CD4-positive, alpha-beta memory T cell (primary cell): ENCODE measurements at regions of chr13 and their contacts with region 1.

Region 1: DNA sequence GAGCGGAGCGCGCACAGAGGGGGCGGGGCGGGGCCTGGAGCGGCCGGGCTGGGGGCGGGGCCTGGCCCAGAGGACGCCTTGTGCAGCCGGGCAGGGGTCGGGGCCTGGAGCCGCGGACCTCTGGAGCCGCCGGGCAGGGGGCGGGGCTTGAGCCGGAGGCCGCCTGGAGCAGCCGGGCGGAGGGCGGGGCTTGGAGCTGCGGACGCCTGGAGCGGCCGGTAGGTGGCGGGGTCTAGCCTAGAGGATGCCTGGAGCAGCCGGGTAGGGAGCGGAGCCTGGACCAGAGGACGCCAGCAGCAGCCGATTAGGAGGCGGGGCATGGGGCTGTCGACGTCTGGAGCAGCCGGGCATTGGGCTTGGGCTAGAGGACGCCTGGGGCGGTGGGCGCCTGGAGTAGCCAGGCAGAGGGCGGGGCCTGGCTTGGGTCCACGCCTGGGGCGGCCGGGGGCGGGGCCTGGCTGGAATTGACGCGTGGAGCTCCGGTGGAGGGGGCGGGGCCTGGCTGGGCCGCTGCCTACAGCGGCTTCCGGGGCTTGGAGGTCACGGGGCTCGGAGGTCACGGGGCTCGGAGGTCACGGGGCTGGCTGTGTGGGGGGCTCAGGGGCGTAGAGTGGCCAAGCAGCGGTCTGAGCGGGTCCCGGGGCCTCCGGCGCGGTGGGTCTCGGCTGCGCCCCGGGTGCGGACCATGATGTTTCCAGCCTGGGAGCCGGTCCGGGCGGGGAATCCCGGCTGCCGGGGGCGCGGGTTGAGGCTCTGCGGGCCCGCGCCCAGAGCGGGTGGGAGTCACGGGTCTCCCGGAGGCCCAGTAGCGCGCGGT is at the start of gene ANKRD10:
- DNase-seq: peak; percentile 90 to 94 (median 91)
- H3K4me3 ChIP-seq: peak within 1 kb of the TSS; percentile 26 to 89
- H3K4me3 Mint-ChIP-seq: peak within 1 kb of the TSS; percentile 89 to 95 (median 92)
- H3K27ac ChIP-seq: peak within 1 kb of the TSS; percentile 77
- H3K27ac Mint-ChIP-seq: peak within 1 kb of the TSS; percentile 90 to 96 (median 95)
- H3K4me1 ChIP-seq: peaks cover 39% of the 10 kb centered on the region
- H3K4me1 Mint-ChIP-seq: peaks cover 20 to 52% (median 37%) of the 10 kb centered on the region in 4 donors
- H3K27me3 ChIP-seq: no peaks in the 10 kb centered on the region
- H3K27me3 Mint-ChIP-seq: no peaks in the 10 kb centered on the region
- total RNA-seq, gene ANKRD10: 127 to 140 TPM

Region 2: GRCh38 chr13:110561344-110562035 is 353.8 kb before region 1 on chr13 and contains the start of gene RAB20:
- CTCF ChIA-PET with region 1: no interaction called
- POLR2A ChIA-PET with region 1: interaction called, 4 read pairs
- intact Hi-C with region 1: loop called (anchors 2 kb)
- DNase-seq: peak; percentile 28 to 63 (median 41)
- H3K4me3 ChIP-seq: peak within 1 kb of the TSS; percentile 61 to 68
- H3K4me3 Mint-ChIP-seq: peak within 1 kb of the TSS; percentile 93 to 100 (median 97)
- H3K27ac ChIP-seq: peak within 1 kb of the TSS; percentile 41
- H3K27ac Mint-ChIP-seq: peak within 1 kb of the TSS; percentile 76 to 94 (median 89)
- H3K4me1 ChIP-seq: peaks cover 17% of the 10 kb centered on the region
- H3K4me1 Mint-ChIP-seq: peaks cover 11 to 41% (median 23%) of the 10 kb centered on the region in 4 donors
- H3K27me3 ChIP-seq: no peaks in the 10 kb centered on the region
- H3K27me3 Mint-ChIP-seq: peaks cover 0 to 2% of the 10 kb centered on the region in 2 donors
- total RNA-seq, gene RAB20: 2.2 to 3.2 TPM

Region 3: DNA sequence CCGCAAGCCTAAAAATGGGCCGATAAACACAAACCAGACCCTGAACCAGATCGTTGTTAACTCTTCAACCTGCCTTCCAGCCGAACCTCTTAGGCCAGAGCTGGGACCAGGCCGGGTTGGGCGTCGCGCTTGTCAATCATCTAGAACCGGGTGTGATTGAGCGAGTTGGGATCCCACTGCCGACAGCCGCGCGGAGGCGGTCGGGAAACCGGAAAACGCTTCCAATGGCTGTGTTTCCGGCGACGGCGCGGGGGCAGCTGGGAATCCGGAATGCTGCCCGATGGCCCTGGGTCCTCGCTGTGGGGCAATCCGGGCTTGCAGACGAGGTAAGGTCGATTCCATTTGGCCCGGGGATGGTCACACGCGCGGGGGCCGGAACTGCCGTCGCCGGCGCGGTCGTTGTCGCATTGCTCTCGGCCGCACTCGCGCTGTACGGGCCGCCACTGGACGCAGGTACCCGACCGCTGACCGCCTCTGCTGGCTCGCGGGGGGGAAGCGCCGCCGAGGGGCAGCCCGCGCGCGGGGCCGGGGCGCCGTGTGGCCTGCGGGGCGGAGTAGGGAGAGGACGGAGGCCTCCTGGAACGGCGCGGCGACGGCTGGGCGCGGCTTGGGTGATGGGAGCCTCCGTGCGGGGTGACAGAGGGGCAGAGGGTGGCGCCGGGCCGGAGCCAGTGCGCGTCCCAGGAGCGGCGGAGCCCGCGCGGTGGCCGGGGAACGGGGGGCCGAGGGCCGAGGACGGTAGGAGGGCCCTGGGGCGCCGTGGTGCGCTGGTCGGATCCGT is 299.8 kb before region 1 on chr13 and contains the start of gene NAXD:
- CTCF ChIA-PET with region 1: no interaction called
- POLR2A ChIA-PET with region 1: interaction called, 5 read pairs
- intact Hi-C with region 1: loop called (anchors 10 kb)
- DNase-seq: peak; percentile 71 to 75 (median 73)
- H3K4me3 ChIP-seq: peak within 1 kb of the TSS; percentile 53 to 67
- H3K4me3 Mint-ChIP-seq: peak within 1 kb of the TSS; percentile 88 to 96 (median 94)
- H3K27ac ChIP-seq: peak within 1 kb of the TSS; percentile 47
- H3K27ac Mint-ChIP-seq: peak within 1 kb of the TSS; percentile 71 to 98 (median 93)
- H3K4me1 ChIP-seq: peaks cover 17% of the 10 kb centered on the region
- H3K4me1 Mint-ChIP-seq: peaks cover 28 to 47% (median 40%) of the 10 kb centered on the region in 4 donors
- H3K27me3 ChIP-seq: no peaks in the 10 kb centered on the region
- H3K27me3 Mint-ChIP-seq: no peaks in the 10 kb centered on the region
- total RNA-seq, gene NAXD: 32.6 to 33.4 TPM

Region 4: DNA sequence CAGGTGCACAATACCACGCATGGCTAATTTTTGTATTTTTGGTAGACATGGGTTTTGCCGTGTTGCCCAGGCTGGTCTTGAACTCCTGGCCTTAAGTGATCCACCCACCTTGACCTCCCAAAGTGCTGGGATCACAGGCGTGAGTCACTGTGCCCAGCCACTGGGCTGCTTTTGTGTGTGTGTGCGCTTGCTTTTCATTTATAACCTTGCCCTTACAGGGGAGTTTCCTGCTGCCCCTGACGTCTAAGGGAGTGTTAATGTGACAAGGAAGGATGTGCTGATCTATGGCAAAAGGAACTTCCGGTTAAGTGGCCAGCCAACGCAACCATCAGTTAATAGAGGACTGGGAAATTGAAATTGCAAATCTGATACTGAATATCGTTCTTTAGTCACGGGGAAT is 144.1 kb before region 1 on chr13:
- CTCF ChIA-PET with region 1: no interaction called
- POLR2A ChIA-PET with region 1: no interaction called
- intact Hi-C with region 1: no loop called
- DNase-seq: no peak
- H3K4me3 ChIP-seq: no peak overlapping the region
- H3K4me3 Mint-ChIP-seq: no peak overlapping the region
- H3K27ac ChIP-seq: no peak overlapping the region
- H3K27ac Mint-ChIP-seq: no peak overlapping the region
- H3K4me1 ChIP-seq: no peaks in the 10 kb centered on the region
- H3K4me1 Mint-ChIP-seq: no peaks in the 10 kb centered on the region
- H3K27me3 ChIP-seq: no peaks in the 10 kb centered on the region
- H3K27me3 Mint-ChIP-seq: peaks cover 3 to 14% of the 10 kb centered on the region in 2 donors

Region 5: DNA sequence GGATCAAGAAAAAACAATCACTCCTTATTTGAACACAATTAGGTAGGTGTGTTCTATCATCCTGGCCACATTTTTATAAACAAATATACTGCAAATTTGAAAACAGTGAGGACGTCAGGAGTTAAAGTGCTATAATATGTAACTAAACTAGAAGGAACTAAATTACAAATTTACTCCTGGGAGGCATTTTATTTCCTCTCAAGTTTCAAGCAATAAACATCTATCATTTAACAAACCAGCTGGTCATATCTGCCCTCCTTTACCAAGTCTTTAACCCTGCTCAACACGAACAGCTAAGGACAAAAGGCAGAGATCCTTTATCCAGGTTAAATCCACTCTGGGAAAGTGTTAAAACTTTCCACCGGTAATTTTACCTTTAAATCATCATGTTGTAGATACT is 26.9 kb before region 1 on chr13:
- CTCF ChIA-PET with region 1: no interaction called
- POLR2A ChIA-PET with region 1: no interaction called
- intact Hi-C with region 1: no loop called
- DNase-seq: no peak
- H3K4me3 ChIP-seq: no peak overlapping the region
- H3K4me3 Mint-ChIP-seq: no peak overlapping the region
- H3K27ac ChIP-seq: no peak overlapping the region
- H3K27ac Mint-ChIP-seq: peak overlapping the region in 2 of 7 donors; percentile 14 to 57
- H3K4me1 ChIP-seq: no peaks in the 10 kb centered on the region
- H3K4me1 Mint-ChIP-seq: peaks cover 0 to 4% (median under 1%) of the 10 kb centered on the region in 4 donors
- H3K27me3 ChIP-seq: no peaks in the 10 kb centered on the region
- H3K27me3 Mint-ChIP-seq: no peaks in the 10 kb centered on the region

Region 6: DNA sequence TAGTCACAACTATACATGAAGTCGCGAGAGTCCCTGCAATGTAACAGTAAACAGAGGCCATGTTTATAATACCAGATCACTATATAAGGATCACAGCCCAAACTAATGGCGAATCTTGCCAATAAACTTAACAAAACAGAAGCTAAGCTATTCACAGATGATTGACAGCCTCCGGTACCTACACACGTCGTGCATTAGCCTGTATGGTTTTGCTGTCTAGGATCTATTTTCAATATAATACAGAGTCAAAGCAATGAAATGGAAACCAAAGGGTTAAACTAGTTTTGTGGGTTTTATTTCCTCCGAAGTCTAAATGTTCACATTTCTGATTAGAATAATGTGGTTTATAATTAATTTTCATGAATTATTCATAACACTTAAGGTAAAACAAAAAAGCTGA is 10.5 kb before region 1 on chr13:
- CTCF ChIA-PET with region 1: interaction called, 10 read pairs
- POLR2A ChIA-PET with region 1: interaction called, 6 read pairs
- intact Hi-C with region 1: no loop called
- DNase-seq: no peak
- H3K4me3 ChIP-seq: no peak overlapping the region
- H3K4me3 Mint-ChIP-seq: no peak overlapping the region
- H3K27ac ChIP-seq: no peak overlapping the region
- H3K27ac Mint-ChIP-seq: no peak overlapping the region
- H3K4me1 ChIP-seq: peaks cover 14% of the 10 kb centered on the region
- H3K4me1 Mint-ChIP-seq: peaks cover 28 to 42% (median 34%) of the 10 kb centered on the region in 4 donors
- H3K27me3 ChIP-seq: no peaks in the 10 kb centered on the region
- H3K27me3 Mint-ChIP-seq: no peaks in the 10 kb centered on the region

Region 7: DNA sequence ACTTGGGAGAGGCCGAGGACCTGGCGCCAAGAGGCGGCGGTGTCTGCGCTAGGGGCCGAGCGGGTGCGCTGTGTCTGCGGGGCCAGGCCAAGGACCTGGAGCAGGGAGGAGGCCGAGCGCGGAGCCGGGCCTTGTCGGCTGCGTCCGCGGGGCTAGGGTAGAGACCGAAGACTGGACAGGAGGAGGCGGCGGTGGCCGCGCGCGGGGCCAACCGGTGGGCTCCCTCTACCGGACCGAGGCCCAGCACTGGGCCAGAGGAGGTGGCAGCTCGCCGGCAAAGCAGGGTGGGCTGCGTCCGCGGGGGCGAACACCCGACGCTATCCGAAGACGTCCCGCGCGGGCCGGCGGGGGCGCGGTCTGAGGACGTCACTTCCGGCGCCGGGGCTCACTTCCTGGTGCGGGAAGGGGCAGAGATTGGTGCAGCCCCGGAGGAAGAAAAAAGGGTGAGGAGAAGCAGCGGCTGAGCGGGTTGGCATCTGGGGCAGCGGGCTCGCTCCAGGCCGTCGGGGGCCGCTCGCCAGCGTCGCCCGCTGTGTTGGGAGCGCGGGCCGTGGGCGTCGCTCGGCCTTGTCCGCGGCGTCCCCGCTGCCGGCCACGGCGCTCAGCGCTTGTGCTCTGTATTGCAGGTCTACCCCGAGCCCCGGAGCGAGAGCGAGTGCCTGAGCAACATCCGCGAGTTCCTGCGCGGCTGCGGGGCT is 238.2 kb after region 1 on chr13:
- CTCF ChIA-PET with region 1: interaction called, 3 read pairs
- POLR2A ChIA-PET with region 1: no interaction called
- intact Hi-C with region 1: loop called (anchors 1 kb)
- DNase-seq: peak; percentile 89 to 92 (median 91)
- H3K4me3 ChIP-seq: peak overlapping the region; percentile 55 to 87
- H3K4me3 Mint-ChIP-seq: peak overlapping the region; percentile 92 to 99 (median 95)
- H3K27ac ChIP-seq: peak overlapping the region; percentile 67
- H3K27ac Mint-ChIP-seq: peak overlapping the region; percentile 85 to 98 (median 93)
- H3K4me1 ChIP-seq: peaks cover 23% of the 10 kb centered on the region
- H3K4me1 Mint-ChIP-seq: peaks cover 13 to 39% (median 27%) of the 10 kb centered on the region in 4 donors
- H3K27me3 ChIP-seq: no peaks in the 10 kb centered on the region
- H3K27me3 Mint-ChIP-seq: no peaks in the 10 kb centered on the region

Region 8: DNA sequence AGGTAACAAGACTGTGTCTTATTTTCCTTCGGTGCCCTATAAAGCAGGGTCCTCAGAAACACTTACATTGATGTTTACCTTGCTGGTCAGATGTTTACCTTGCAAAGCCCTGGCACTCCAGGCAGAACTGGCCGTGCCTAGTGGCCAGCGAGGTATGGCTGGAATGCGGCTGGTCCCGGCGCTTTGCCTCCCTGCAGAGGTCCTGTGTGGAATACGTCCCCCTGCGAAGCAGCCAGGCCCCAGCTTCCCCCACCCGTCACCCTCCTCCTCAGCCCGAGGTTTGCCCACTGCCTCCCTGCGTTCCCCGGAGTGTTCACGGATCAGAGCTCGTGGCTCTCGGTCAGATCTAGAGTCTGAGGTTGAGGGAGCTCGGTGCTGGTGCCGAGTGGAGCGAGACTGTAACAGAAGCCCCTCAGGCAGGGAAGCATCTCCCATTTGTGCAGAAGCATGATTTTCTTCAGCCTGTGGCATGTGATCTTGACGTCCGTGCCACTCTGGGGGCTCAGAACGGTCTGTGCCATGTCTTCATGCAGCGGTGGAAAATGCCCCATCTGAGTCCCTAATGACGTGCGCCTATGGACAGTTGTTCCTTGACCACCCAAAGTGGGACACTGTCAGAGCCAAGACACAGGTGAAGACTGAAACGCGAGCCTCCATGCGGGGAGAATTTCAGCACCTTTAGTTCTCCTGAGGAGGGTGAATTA is 1096.9 kb after region 1 on chr13:
- CTCF ChIA-PET with region 1: no interaction called
- POLR2A ChIA-PET with region 1: no interaction called
- intact Hi-C with region 1: no loop called
- DNase-seq: no peak
- H3K4me3 ChIP-seq: no peak overlapping the region
- H3K4me3 Mint-ChIP-seq: no peak overlapping the region
- H3K27ac ChIP-seq: no peak overlapping the region
- H3K27ac Mint-ChIP-seq: no peak overlapping the region
- H3K4me1 ChIP-seq: no peaks in the 10 kb centered on the region
- H3K4me1 Mint-ChIP-seq: no peaks in the 10 kb centered on the region
- H3K27me3 ChIP-seq: no peaks in the 10 kb centered on the region
- H3K27me3 Mint-ChIP-seq: no peaks in the 10 kb centered on the region